Activated B cell treated with CpG ODN at 0.5 μM for 24 hours (primary cell): ENCODE measurements at regions of chr19 and their contacts with region 1.

Region 1: DNA sequence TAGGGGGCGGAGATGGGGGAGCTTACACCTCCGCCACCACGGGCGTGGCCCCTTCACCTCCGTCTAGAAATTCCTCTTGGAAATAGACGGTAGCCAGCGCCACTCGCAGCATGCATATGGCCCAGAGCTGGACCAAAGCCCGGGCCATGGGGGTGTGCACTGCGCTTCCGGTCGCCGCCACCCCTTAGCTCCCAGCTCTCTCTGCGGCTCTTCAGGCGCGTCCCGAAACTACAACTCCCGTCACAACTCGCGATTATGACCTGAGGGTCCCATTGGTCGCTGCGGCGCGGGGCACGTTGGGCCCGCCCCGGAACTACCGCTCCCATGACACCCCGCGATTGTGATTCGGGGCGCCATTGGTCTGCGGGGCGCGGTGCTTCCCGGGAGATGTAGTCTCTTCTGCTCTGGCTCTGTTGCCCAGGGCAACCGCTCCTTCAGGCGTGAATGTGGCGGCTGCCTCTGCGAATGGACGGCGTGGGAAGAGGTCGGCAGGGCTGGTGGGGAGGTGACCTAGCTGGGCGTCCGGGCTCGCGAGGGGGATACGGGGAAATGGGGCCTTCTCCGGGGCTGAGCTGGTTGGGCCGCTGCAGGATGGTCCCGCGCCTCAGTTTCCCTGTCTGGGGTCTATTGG is at the starts of genes C19orf44 and CALR3:
- DNase-seq: peak; percentile 94
- ATAC-seq: peak; percentile 97
- H3K4me3 Mint-ChIP-seq: peak within 1 kb of the TSS; percentile 98
- H3K27ac Mint-ChIP-seq: peak within 1 kb of the TSS; percentile 88
- H3K4me1 Mint-ChIP-seq: peaks cover 19% of the 10 kb centered on the region
- H3K27me3 Mint-ChIP-seq: no peaks in the 10 kb centered on the region
- CTCF ChIP-seq: no peak
- total RNA-seq, gene C19orf44: 5.9 and 7.1 TPM in 2 replicates
- total RNA-seq, gene CALR3: not detected in 2 replicates

Region 2: DNA sequence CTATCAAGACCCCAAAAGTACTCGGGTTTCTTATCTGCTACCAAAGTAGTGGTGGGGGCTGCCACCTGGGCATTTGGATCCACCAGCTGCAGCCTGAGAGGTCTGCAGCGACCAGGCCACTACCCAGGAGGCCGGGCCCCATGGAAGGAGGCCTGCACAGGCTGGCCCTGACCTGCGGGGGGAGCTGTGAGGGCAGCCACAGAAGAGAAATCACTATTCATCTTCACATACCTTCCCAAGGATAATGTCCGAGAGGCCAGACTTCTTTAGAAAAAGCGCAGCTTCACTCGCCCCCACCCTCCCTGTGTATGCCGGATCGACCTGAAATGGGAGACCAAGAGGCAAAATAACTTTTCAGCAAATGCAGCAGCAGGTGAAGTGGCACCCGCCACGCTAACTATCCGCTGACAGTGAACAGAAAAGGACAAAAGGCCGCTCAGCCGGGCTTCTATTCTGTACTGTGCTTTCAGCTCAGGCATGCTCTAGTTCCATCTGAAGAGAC is 54.4 kb before region 1 on chr19:
- CTCF ChIA-PET with region 1: interaction called, 6 read pairs
- POLR2A ChIA-PET with region 1: interaction called, 22 read pairs
- intact Hi-C with region 1: no loop called
- DNase-seq: no peak
- ATAC-seq: no peak
- H3K4me3 Mint-ChIP-seq: no peak overlapping the region
- H3K27ac Mint-ChIP-seq: peak overlapping the region; percentile 95
- H3K4me1 Mint-ChIP-seq: peaks cover 82% of the 10 kb centered on the region
- H3K27me3 Mint-ChIP-seq: no peaks in the 10 kb centered on the region
- CTCF ChIP-seq: no peak

Region 3: GRCh38 chr19:16470911-16471811 is 24.9 kb before region 1 on chr19:
- CTCF ChIA-PET with region 1: no interaction called
- POLR2A ChIA-PET with region 1: interaction called, 5 read pairs
- intact Hi-C with region 1: loop called (anchors 1 kb)
- DNase-seq: peak; percentile 37
- ATAC-seq: peak; percentile 2
- H3K4me3 Mint-ChIP-seq: peak overlapping the region; percentile 86
- H3K27ac Mint-ChIP-seq: peak overlapping the region; percentile 7
- H3K4me1 Mint-ChIP-seq: peaks cover 43% of the 10 kb centered on the region
- H3K27me3 Mint-ChIP-seq: no peaks in the 10 kb centered on the region
- CTCF ChIP-seq: no peak

Region 4: DNA sequence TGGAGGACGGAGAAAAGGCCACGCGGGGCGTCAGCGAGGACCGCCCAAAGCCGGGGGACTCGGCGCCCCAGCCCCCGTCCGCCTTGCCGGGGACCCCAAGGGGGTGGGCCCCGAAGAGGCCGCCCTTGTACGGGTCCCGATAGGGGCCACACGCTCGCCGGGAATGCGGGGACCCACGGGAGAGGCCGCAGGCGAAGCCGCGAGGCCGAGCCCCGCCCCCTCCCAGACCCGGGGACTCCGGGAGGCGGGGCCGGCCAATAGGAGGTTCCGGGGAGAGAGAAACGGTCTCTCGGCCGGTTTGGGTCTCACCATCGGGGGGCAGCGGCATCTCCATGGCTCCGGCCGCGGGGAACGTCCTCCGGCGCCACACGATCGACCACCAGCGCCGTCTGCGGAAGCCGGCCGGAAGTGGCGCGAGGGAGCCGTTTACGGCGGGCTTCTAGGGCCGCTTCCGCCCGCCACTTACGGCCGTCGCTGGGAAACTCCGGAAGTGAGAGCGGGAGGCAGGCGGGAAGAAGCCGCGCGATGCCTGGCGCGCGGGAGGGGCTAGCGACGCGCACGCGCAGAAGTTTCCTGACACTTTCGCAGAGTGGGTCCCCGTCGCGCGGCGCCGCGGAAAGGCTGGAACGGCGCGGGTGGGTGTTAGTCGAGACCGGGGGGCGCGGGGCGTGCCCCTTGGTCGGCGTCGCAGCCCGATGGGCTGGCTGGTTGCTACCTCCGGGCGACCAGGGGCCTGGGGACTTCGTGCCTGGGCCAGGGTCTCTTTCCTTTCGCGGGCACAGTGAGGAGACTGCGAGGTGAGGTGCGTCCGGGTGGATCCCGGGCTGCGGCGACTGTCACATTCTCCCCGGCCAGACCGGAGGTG is 46.2 kb after region 1 on chr19 and contains the start of gene CHERP:
- CTCF ChIA-PET with region 1: no interaction called
- POLR2A ChIA-PET with region 1: interaction called, 4 read pairs
- intact Hi-C with region 1: loop called (anchors 1 kb)
- DNase-seq: peak; percentile 93
- ATAC-seq: peak; percentile 82
- H3K4me3 Mint-ChIP-seq: peak within 1 kb of the TSS; percentile 86
- H3K27ac Mint-ChIP-seq: peak within 1 kb of the TSS; percentile 76
- H3K4me1 Mint-ChIP-seq: peaks cover 61% of the 10 kb centered on the region
- H3K27me3 Mint-ChIP-seq: no peaks in the 10 kb centered on the region
- CTCF ChIP-seq: no peak
- total RNA-seq, gene CHERP: 70.9 and 89.3 TPM in 2 replicates

Region 5: DNA sequence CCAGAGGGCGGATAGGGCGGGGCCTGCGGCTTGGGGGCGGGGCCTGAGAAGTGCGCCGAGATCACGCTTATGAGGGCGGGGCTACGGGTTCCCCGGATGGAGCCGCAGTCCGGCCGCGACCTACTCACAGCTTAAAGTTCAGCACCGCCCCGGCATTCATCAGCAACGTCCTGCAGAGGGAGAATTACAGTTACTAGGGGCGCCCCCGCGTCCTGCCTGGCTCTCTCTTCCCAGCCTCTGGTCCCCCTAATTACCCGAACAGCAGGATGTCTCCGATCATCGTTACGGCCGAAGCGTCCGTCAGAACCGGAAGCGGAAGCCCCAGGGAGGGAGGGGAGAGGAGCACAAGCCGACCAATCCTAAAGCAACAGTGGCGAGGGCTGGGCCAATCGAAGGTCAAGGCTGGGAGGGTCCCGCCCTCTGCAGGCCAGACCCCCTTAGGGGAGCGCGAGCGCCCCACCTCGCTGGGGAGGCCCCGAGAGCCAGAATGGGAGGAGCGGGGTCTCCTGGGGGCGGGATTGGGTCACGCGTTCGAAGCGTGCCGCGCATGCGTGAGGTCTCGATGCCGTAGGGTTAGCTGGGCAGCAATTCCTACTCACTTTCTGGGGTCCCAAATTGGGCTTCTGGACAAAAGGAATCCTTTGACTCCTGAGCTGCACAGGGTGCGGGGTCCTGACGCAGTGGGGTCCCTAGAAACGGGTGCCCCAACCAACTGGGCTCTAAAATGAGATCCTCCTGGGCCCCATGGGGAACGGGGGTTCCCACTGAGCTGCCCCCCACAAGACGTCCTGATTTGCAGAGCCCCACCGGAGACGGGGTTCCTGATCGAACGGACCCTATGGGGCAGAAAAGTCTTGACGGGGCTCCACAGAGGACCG is 164.0 kb after region 1 on chr19 and contains the start of gene SMIM7:
- CTCF ChIA-PET with region 1: no interaction called
- POLR2A ChIA-PET with region 1: interaction called, 3 read pairs
- intact Hi-C with region 1: loop called (anchors 1 kb)
- DNase-seq: peak; percentile 96
- ATAC-seq: peak; percentile 96
- H3K4me3 Mint-ChIP-seq: peak within 1 kb of the TSS; percentile 97
- H3K27ac Mint-ChIP-seq: peak within 1 kb of the TSS; percentile 95
- H3K4me1 Mint-ChIP-seq: peaks cover 50% of the 10 kb centered on the region
- H3K27me3 Mint-ChIP-seq: no peaks in the 10 kb centered on the region
- CTCF ChIP-seq: no peak
- total RNA-seq, gene SMIM7: 90.2 and 110 TPM in 2 replicates